T-cell (primary cell): ENCODE measurements at regions of chr3 and their contacts with region 1.

Region 1: DNA sequence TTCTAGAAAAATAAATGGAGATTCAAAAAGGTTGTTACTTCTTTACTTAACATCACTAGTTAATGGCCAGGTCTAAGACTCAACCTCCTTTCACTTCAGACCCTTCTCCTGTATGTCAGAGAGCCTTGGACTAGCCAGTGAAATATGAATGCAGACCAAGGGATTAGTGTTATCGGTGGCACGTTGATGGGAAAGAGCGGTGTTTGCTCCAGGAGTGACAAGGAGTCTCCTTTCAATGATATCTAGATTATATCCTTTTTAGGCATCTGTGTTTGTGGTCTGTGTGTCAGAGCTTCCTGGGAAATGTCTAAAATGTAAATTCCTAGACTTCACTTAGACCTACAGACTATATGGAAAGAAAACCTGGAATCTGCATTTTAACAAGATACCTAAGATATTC is 658.0 kb upstream of the KCNMB2 start:
- DNase-seq: no peak
- ATAC-seq: no peak
- H3K4me3 ChIP-seq: no peak overlapping the region
- H3K4me3 Mint-ChIP-seq: no peak overlapping the region
- H3K27ac ChIP-seq: no peak overlapping the region
- H3K27ac Mint-ChIP-seq: no peak overlapping the region
- H3K4me1 ChIP-seq: peaks cover 0 to 3% of the 10 kb centered on the region in 2 experiments
- H3K4me1 Mint-ChIP-seq: peaks cover 10 to 22% (median 10%) of the 10 kb centered on the region in 3 donors
- H3K27me3 ChIP-seq: no peaks in the 10 kb centered on the region
- H3K27me3 Mint-ChIP-seq: no peaks in the 10 kb centered on the region

Region 2: GRCh38 chr3:177934001-177934891 is 56.1 kb after region 1 on chr3:
- CTCF ChIA-PET with region 1: no interaction called
- POLR2A ChIA-PET with region 1: no interaction called
- DNase-seq: no peak
- ATAC-seq: no peak
- H3K4me3 ChIP-seq: no peak overlapping the region
- H3K4me3 Mint-ChIP-seq: no peak overlapping the region
- H3K27ac ChIP-seq: no peak overlapping the region
- H3K27ac Mint-ChIP-seq: no peak overlapping the region
- H3K4me1 ChIP-seq: no peaks in the 10 kb centered on the region
- H3K4me1 Mint-ChIP-seq: no peaks in the 10 kb centered on the region
- H3K27me3 ChIP-seq: no peaks in the 10 kb centered on the region
- H3K27me3 Mint-ChIP-seq: no peaks in the 10 kb centered on the region

Region 3: DNA sequence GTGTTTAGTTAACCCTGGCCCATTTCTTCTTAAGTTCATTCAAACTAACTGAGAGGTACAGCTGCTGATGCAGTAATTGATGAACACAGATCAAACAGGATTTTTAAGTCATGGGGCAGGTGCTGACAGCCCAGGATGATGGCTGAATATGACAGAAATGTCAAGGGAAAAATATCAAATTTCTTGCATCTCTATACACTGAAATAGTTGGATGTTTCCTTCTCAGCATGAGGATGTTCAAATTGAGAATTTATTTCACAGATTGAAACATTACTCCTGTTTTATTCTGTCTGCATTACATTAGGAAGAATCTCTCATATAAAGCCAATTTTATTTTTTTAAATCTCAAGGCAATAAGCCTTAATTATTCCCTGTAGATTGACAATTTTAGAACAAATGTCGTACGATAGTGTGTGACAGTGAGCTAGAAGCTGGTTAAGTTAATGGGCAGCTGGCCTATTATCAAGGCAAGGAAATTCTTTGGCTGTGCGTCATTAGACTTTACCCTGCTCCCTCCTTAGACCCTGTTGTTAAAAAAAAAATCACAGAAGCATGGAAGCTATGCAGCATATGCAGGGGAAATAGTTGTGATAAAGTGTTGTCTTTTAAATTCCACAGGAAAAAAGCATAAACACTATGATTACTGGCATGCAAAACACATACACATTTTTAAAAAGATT is 474.3 kb after region 1 on chr3:
- CTCF ChIA-PET with region 1: no interaction called
- POLR2A ChIA-PET with region 1: interaction called in 1 of 2 experiments, 15 read pairs
- DNase-seq: no peak
- ATAC-seq: no peak
- H3K4me3 ChIP-seq: no peak overlapping the region
- H3K4me3 Mint-ChIP-seq: no peak overlapping the region
- H3K27ac ChIP-seq: no peak overlapping the region
- H3K27ac Mint-ChIP-seq: no peak overlapping the region
- H3K4me1 ChIP-seq: no peaks in the 10 kb centered on the region
- H3K4me1 Mint-ChIP-seq: no peaks in the 10 kb centered on the region
- H3K27me3 ChIP-seq: no peaks in the 10 kb centered on the region
- H3K27me3 Mint-ChIP-seq: peaks cover 0 to 4% of the 10 kb centered on the region in 2 donors